Thyroid gland (tissue), 4 donors: ENCODE measurements at regions of chr19 and their contacts with region 1.

Region 1: DNA sequence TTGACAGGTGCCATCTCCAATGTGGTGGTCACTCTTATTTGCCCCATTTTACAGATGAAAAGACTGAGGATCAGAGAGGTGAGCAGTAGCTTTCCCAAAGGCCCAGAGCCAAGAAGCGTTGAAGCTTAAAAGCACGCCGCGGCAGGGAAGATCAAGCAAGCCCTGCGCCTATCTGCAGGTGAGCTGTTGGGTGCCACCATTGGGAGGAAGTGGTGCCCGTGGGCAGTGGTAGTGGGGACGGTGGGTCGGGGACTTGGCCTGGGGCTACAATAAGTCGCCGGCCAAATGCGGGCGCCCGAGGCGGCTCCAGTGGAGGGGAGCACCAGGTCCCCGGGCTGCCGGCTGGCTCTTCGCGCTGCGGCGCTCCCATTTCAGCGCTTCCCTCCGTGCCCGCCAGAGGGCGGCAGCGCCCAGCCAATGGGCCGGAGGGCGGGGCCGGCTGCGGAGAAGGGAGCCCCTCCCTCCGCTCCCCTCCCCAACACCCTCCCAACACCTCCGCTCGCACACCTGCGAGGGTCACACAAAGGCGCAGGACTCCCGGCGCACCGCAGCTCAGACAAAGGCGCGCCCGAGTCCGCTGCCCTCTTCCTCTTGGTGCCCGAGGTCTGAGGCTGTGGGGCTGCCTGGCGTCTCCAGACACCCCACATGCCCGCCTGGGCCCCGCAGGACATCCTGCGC is 744 bp upstream of the POU2F2 start:
- DNase-seq: peak; percentile 56 to 59
- H3K4me3 ChIP-seq: no peak overlapping the region
- H3K27ac ChIP-seq: no peak overlapping the region
- H3K4me1 ChIP-seq: peaks cover 7 to 13% of the 10 kb centered on the region in 2 donors
- H3K27me3 ChIP-seq: peaks cover 9% of the 10 kb centered on the region
- CTCF ChIP-seq: peak; percentile 58 to 97 (median 88)
- POLR2A ChIP-seq: no peak

Region 2: DNA sequence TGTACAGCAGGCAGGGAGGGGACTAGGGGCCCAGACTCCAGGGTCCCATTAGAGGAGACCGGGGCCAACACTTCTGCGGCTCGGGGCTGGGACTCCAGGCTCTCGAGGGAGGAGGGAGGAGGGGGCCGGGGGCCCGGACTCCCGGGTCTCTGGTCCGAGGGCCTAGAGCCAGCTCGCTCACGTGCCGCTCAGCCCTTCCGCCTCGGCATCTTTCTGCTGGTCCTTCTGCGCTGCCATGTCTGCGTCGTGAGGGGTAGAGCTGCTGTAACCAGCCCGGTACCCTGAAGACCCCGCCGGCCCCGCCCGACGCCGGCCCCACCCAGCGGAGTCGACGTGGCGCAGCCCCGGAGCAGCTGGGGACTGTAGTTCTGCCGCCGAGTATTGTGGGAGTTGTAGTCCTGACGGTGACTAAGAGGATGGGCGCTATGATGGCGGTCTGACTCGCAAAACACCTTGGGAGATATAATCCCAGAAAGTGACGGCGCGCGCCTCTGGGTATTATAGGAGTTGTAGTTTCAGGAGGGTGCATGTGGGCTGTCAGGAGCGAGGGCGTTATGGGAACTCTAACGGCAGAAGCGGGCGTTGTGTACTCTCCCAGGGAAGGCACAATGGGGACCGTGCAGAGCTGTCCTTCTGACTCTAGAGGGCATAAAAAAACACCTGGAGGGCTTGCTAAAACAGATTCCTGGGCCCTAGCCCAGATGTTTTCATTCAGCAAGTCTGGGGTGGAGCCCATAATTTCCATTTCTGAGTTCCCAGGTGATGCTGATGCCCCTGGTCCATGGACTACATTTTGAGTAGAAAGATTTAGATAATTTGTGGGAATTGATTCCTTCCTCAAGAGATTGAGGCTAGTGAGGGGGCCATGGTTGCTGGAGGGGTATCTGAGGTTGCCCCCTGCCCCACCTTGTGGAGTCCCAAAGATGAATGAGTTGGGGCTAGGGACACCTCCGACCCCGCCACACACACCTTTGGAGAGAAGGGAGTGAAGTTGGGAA is 173.6 kb before region 1 on chr19 and contains the start of gene RABAC1:
- intact Hi-C with region 1: no loop called
- DNase-seq: peak; percentile 82 to 86
- H3K4me3 ChIP-seq: peak within 1 kb of the TSS; percentile 66 to 91 (median 87)
- H3K27ac ChIP-seq: peak within 1 kb of the TSS; percentile 70 to 92 (median 89)
- H3K4me1 ChIP-seq: peaks cover 6 to 13% of the 10 kb centered on the region in 2 donors
- H3K27me3 ChIP-seq: no peaks in the 10 kb centered on the region
- CTCF ChIP-seq: peak in 1 of 6 experiments; percentile 25
- POLR2A ChIP-seq: peak in 1 of 2 donors; percentile 58
- total RNA-seq, gene RABAC1: 138 to 359 (median 241) TPM

Region 3: GRCh38 chr19:42290523-42291438 is 157.8 kb after region 1 on chr19:
- intact Hi-C with region 1: loop called (anchors 5 kb)
- DNase-seq: no peak
- H3K4me3 ChIP-seq: no peak overlapping the region
- H3K27ac ChIP-seq: no peak overlapping the region
- H3K4me1 ChIP-seq: peaks cover 12 to 13% of the 10 kb centered on the region in 2 donors
- H3K27me3 ChIP-seq: no peaks in the 10 kb centered on the region
- CTCF ChIP-seq: peak in 1 of 6 experiments; percentile 18
- POLR2A ChIP-seq: no peak

Region 4: DNA sequence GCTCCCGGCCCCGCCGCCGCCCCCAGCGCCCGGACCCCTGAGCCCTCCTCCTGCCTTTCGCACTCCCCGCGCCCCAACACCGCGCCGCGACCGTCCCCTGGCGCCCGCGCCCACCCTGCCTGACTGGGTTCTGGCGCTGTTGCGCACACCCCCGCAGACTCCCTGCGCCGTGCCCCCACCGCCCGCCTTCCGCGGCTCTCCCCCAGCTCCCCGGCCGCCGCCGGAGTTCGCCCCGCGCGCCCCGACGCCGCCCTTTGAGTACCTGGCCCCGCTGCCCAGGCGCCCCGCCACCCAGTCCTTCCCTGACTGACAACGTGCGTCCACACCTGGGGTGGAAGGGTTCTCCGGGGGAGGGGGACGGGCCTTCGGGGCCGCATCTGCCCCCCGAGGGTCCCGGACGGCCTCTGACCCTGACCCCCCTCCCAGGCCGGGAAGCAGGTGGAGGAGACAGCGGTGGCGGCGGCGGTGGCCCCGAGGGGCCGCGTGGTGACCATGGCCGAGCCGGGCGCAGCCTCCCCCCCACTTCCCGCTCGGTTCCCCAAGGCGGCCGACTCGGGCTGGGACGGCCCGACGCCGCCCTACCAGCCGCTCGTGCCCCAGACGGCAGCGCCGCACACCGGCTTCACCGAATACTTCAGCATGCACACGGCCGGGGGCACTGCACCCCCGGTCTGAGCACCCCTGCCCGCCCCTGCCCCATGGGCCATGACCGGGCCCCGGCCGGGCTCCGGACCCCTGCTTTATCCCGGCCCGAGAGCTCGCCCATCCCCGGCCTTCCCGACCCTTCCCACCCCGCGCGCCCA is 191.1 kb after region 1 on chr19:
- intact Hi-C with region 1: loop called (anchors 5 kb)
- DNase-seq: peak in 1 of 2 donors; percentile 10
- H3K4me3 ChIP-seq: peak overlapping the region in 1 of 3 donors; percentile 10
- H3K27ac ChIP-seq: no peak overlapping the region
- H3K4me1 ChIP-seq: peaks cover 25 to 33% of the 10 kb centered on the region in 2 donors
- H3K27me3 ChIP-seq: peaks cover 13% of the 10 kb centered on the region
- CTCF ChIP-seq: no peak
- POLR2A ChIP-seq: no peak